ENCODE measurements at regions of chr4 and their contacts with region 1.

Region 1: GRCh38 chr4:122716825-122717448 is 15.6 kb upstream of the BBS12 start:
- DNase-seq: peak; percentile 65
- H3K4me3 ChIP-seq: no peak overlapping the region
- H3K27ac ChIP-seq: no peak overlapping the region
- H3K4me1 ChIP-seq: peaks cover 8% of the 10 kb centered on the region
- H3K27me3 ChIP-seq: no peaks in the 10 kb centered on the region
- CTCF ChIP-seq: peak; percentile 80 to 93
- POLR2A ChIP-seq: no peak

Region 2: GRCh38 chr4:122577808-122578781 is 138.8 kb before region 1 on chr4:
- CTCF ChIA-PET with region 1: interaction called, 17 read pairs
- POLR2A ChIA-PET with region 1: no interaction called
- dilution Hi-C with region 1: no loop called
- intact Hi-C with region 1: no loop called
- DNase-seq: peak; percentile 40
- H3K4me3 ChIP-seq: no peak overlapping the region
- H3K27ac ChIP-seq: no peak overlapping the region
- H3K4me1 ChIP-seq: no peaks in the 10 kb centered on the region
- H3K27me3 ChIP-seq: peaks cover 2% of the 10 kb centered on the region in 2 experiments
- CTCF ChIP-seq: peak; percentile 50 to 60
- POLR2A ChIP-seq: no peak

Region 3: DNA sequence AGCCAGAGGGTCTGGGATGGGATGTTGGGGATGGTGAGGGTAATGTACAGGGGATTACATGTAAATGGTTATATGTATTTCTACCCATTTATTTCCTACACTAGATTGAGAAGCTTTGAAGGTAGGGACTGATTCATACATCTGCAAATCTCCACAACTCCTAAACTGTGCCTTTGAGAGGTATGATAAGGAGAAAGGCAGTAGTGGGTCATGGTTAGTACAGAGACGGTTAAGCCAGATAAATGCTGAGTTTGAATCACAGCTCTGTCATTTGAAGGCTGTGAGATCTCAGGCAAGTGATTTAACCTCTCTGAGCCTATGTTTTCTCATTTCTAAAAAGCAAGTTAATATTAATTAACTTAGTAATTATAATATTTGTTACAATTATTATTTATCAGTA is 66.8 kb before region 1 on chr4:
- CTCF ChIA-PET with region 1: interaction called, 11 read pairs
- POLR2A ChIA-PET with region 1: no interaction called
- dilution Hi-C with region 1: no loop called
- intact Hi-C with region 1: no loop called
- DNase-seq: no peak
- H3K4me3 ChIP-seq: no peak overlapping the region
- H3K27ac ChIP-seq: no peak overlapping the region
- H3K4me1 ChIP-seq: no peaks in the 10 kb centered on the region
- H3K27me3 ChIP-seq: peaks cover 9 to 10% of the 10 kb centered on the region in 2 experiments
- CTCF ChIP-seq: no peak
- POLR2A ChIP-seq: no peak

Region 4: DNA sequence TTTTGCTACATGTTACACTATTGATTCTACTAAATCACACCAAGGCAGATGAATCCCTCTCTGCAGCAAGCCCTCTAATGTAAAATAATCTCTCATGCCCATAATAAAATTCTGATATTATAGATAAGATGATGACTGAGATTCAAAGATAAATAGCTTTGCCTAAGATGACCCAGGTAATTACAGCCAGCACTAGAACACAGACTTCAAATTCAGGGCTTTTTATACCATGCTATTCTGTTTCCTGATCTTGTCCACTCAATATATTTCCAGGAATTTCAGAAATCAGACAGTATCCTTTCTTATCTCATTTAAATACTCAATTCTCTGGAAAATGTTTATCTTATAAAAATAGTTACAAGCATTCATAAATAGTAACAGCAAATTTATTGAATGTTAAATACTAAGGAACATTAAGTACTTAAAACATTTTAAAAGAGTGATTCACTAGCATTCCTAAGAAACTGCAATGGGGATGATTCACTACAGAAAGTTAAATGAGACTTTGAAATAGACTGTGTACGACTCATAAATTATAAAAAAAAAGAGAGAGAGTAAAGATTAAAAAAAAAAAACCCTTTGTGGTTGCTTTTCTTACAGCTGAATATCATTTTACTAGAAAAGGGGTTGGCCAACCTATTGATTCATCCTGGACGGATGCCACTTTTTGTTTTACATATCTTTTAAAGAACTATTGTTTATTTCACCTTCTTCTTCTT is 50.3 kb before region 1 on chr4:
- CTCF ChIA-PET with region 1: interaction called, 16 read pairs
- POLR2A ChIA-PET with region 1: no interaction called
- dilution Hi-C with region 1: no loop called
- intact Hi-C with region 1: loop called (anchors 2 kb)
- DNase-seq: peak; percentile 71
- H3K4me3 ChIP-seq: no peak overlapping the region
- H3K27ac ChIP-seq: peak overlapping the region; percentile 68
- H3K4me1 ChIP-seq: peaks cover 29% of the 10 kb centered on the region
- H3K27me3 ChIP-seq: no peaks in the 10 kb centered on the region
- CTCF ChIP-seq: no peak
- POLR2A ChIP-seq: no peak

Region 5: DNA sequence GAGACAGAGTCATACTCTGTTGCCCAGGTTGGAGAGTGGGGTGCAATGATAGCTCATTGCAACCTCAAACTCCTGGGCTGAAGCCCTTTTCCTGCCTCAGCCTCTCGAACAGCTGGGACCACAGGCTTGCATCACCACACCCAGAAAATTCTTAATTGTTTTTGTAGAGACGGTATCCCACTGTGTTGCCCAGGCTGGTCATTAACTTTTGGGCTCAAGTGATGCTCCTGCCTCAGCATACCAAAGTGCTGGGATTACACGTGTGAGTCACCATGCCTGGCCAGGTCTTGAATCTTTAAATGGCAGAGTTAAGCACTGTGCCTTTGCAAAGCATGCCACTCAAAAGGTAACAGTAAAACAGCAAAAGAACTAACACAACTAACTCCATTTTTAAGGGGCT is 13.1 kb before region 1 on chr4:
- CTCF ChIA-PET with region 1: interaction called, 18 read pairs
- POLR2A ChIA-PET with region 1: no interaction called
- dilution Hi-C with region 1: no loop called
- intact Hi-C with region 1: no loop called
- DNase-seq: no peak
- H3K4me3 ChIP-seq: no peak overlapping the region
- H3K27ac ChIP-seq: no peak overlapping the region
- H3K4me1 ChIP-seq: peaks cover 4% of the 10 kb centered on the region
- H3K27me3 ChIP-seq: peaks cover 0 to 4% of the 10 kb centered on the region in 2 experiments
- CTCF ChIP-seq: no peak
- POLR2A ChIP-seq: no peak

Region 6: GRCh38 chr4:122798101-122798500 is 81.2 kb after region 1 on chr4:
- CTCF ChIA-PET with region 1: no interaction called
- POLR2A ChIA-PET with region 1: no interaction called
- dilution Hi-C with region 1: no loop called
- intact Hi-C with region 1: no loop called
- DNase-seq: peak; percentile 84
- H3K4me3 ChIP-seq: no peak overlapping the region
- H3K27ac ChIP-seq: peak overlapping the region; percentile 58
- H3K4me1 ChIP-seq: peaks cover 7% of the 10 kb centered on the region
- H3K27me3 ChIP-seq: no peaks in the 10 kb centered on the region
- CTCF ChIP-seq: peak in 1 of 2 donors; percentile 2
- POLR2A ChIP-seq: no peak

Region 7: DNA sequence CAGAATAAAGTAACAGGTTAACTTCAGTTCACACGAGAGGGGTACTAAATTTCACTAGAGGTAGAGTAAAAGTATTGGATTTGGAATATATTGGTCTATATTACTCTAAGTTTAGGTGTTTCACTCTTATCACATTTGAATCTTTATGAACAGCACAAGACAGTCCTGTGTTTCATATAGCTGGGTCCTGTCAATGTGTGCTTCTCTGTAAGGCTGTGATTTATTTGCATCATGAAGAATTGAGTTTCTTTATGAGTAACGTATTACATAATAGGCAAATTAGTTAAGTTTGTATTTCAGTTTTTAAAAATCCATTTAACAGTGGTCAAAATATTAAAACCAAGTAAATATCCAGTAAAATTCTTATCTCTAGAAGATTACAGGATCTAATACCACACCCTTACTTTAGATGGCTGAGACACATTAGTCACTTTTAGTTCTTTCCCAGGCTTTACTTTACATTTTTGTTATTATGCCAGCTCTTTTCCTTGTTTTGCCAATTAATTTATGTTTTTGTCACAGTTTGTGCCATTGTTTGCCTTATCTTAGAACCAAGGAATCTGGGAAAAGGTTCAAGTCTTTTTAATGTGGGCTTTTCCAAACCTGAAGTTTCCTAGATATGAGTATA is 173.3 kb after region 1 on chr4:
- CTCF ChIA-PET with region 1: no interaction called
- POLR2A ChIA-PET with region 1: no interaction called
- dilution Hi-C with region 1: no loop called
- intact Hi-C with region 1: no loop called
- DNase-seq: peak; percentile 92
- H3K4me3 ChIP-seq: no peak overlapping the region
- H3K27ac ChIP-seq: peak overlapping the region; percentile 66
- H3K4me1 ChIP-seq: peaks cover 26% of the 10 kb centered on the region
- H3K27me3 ChIP-seq: no peaks in the 10 kb centered on the region
- CTCF ChIP-seq: no peak
- POLR2A ChIP-seq: no peak

Region 8: GRCh38 chr4:122914292-122914904 is 197.5 kb after region 1 on chr4:
- CTCF ChIA-PET with region 1: interaction called, 19 read pairs
- POLR2A ChIA-PET with region 1: no interaction called
- dilution Hi-C with region 1: no loop called
- intact Hi-C with region 1: loop called (anchors 1 kb)
- DNase-seq: peak; percentile 77
- H3K4me3 ChIP-seq: no peak overlapping the region
- H3K27ac ChIP-seq: no peak overlapping the region
- H3K4me1 ChIP-seq: peaks cover 4% of the 10 kb centered on the region
- H3K27me3 ChIP-seq: no peaks in the 10 kb centered on the region
- CTCF ChIP-seq: peak; percentile 27 to 30
- POLR2A ChIP-seq: no peak

Region 9: DNA sequence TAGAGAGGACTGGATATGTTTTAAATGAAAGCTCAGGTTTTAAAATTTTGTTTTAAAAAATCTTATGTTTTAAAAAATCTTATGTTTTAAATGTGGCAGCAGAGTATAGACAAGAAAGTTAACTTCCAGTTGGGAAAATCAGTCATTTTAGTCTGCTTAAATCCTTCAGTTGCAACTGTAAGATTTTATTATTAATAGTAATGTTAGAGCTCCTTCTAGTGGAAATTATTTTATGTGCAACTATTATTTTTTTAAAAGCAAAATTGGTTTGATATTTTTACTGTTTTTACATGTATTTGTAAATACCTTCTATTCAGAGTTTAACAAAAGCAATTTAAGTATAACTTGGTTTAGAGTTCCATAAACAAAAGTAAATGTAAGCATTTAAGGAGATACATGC is 213.9 kb after region 1 on chr4:
- CTCF ChIA-PET with region 1: interaction called, 20 read pairs
- POLR2A ChIA-PET with region 1: no interaction called
- dilution Hi-C with region 1: no loop called
- intact Hi-C with region 1: no loop called
- DNase-seq: peak; percentile 40
- H3K4me3 ChIP-seq: no peak overlapping the region
- H3K27ac ChIP-seq: no peak overlapping the region
- H3K4me1 ChIP-seq: no peaks in the 10 kb centered on the region
- H3K27me3 ChIP-seq: no peaks in the 10 kb centered on the region
- CTCF ChIP-seq: peak in 1 of 2 donors; percentile 25
- POLR2A ChIP-seq: no peak